Calu3 (cell line): ENCODE measurements at regions of chr20 and their contacts with region 1.

Region 1: GRCh38 chr20:63894358-63895201 is at the start of gene DNAJC5:
- DNase-seq: peak; percentile 99
- H3K4me3 Mint-ChIP-seq: peak within 1 kb of the TSS; percentile 72
- H3K27ac Mint-ChIP-seq: peak within 1 kb of the TSS; percentile 63
- H3K4me1 Mint-ChIP-seq: peaks cover 43% of the 10 kb centered on the region
- H3K27me3 Mint-ChIP-seq: no peaks in the 10 kb centered on the region
- CTCF ChIP-seq: no peak
- total RNA-seq, gene DNAJC5: 79.9 and 85.9 TPM in 2 replicates

Region 2: GRCh38 chr20:64057628-64058498 is 163.3 kb after region 1 on chr20:
- CTCF ChIA-PET with region 1: no interaction called
- intact Hi-C with region 1: loop called (anchors 10 kb)
- DNase-seq: peak; percentile 96
- H3K4me3 Mint-ChIP-seq: peak overlapping the region; percentile 49
- H3K27ac Mint-ChIP-seq: no peak overlapping the region
- H3K4me1 Mint-ChIP-seq: peaks cover 25% of the 10 kb centered on the region
- H3K27me3 Mint-ChIP-seq: peaks cover 32% of the 10 kb centered on the region
- CTCF ChIP-seq: peak; percentile 93